ENCODE measurements at regions of chr10 and their contacts with region 1.

Region 1: DNA sequence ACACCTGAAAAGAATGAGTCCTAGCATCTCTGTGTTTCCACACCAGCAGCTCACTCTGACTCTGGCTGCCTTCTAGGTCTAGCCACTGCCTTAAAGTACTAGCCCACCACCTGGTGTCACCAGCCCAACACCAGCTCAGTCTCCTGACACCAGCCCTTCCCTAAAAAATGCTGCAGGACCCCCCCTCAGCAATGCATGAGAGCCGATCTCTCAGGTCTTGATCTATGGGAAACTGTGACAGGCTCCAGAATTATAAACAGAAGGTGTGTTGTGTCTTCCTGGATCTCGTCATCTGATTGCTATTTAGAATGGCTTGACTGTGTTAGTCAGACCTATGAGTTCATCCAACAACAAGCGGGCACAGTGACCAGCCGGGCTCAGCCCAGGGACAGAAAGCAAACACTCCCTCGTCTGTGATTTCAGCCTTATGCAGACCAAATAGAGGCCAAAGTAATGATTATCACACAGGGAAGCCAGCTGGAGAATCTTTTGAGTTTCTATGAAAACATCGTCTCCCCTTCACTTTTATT is 66.6 kb downstream of the CUBN start:
- DNase-seq: peak; percentile 72
- H3K4me3 Mint-ChIP-seq: peak overlapping the region; percentile 51
- H3K27ac Mint-ChIP-seq: peak overlapping the region; percentile 63
- H3K4me1 Mint-ChIP-seq: peaks cover 52% of the 10 kb centered on the region
- H3K27me3 Mint-ChIP-seq: no peaks in the 10 kb centered on the region
- CTCF ChIP-seq: no peak

Region 2: GRCh38 chr10:16853201-16853600 is 209.8 kb before region 1 on chr10:
- CTCF ChIA-PET with region 1: interaction called, 3 read pairs
- POLR2A ChIA-PET with region 1: no interaction called
- intact Hi-C with region 1: loop called (anchors 10 kb)
- DNase-seq: peak; percentile 33
- H3K4me3 Mint-ChIP-seq: no peak overlapping the region
- H3K27ac Mint-ChIP-seq: no peak overlapping the region
- H3K4me1 Mint-ChIP-seq: peaks cover 24% of the 10 kb centered on the region
- H3K27me3 Mint-ChIP-seq: no peaks in the 10 kb centered on the region
- CTCF ChIP-seq: peak; percentile 19

Region 3: GRCh38 chr10:17023386-17024298 is 39.4 kb before region 1 on chr10:
- CTCF ChIA-PET with region 1: no interaction called
- POLR2A ChIA-PET with region 1: interaction called, 4 read pairs
- intact Hi-C with region 1: loop called (anchors 1 kb)
- DNase-seq: peak; percentile 90
- H3K4me3 Mint-ChIP-seq: peak overlapping the region; percentile 67
- H3K27ac Mint-ChIP-seq: peak overlapping the region; percentile 98
- H3K4me1 Mint-ChIP-seq: peaks cover 28% of the 10 kb centered on the region
- H3K27me3 Mint-ChIP-seq: no peaks in the 10 kb centered on the region
- CTCF ChIP-seq: no peak

Region 4: GRCh38 chr10:17029581-17030271 is 33.3 kb before region 1 on chr10:
- CTCF ChIA-PET with region 1: no interaction called
- POLR2A ChIA-PET with region 1: no interaction called
- intact Hi-C with region 1: loop called (anchors 1 kb)
- DNase-seq: peak; percentile 82
- H3K4me3 Mint-ChIP-seq: peak overlapping the region; percentile 19
- H3K27ac Mint-ChIP-seq: peak overlapping the region; percentile 39
- H3K4me1 Mint-ChIP-seq: peaks cover 19% of the 10 kb centered on the region
- H3K27me3 Mint-ChIP-seq: no peaks in the 10 kb centered on the region
- CTCF ChIP-seq: no peak

Region 5: GRCh38 chr10:17075533-17076359 is 12.7 kb after region 1 on chr10:
- CTCF ChIA-PET with region 1: no interaction called
- POLR2A ChIA-PET with region 1: interaction called, 27 read pairs
- intact Hi-C with region 1: no loop called
- DNase-seq: peak; percentile 87
- H3K4me3 Mint-ChIP-seq: no peak overlapping the region
- H3K27ac Mint-ChIP-seq: peak overlapping the region; percentile 54
- H3K4me1 Mint-ChIP-seq: peaks cover 29% of the 10 kb centered on the region
- H3K27me3 Mint-ChIP-seq: no peaks in the 10 kb centered on the region
- CTCF ChIP-seq: no peak

Region 6: GRCh38 chr10:17128261-17128660 is 65.2 kb after region 1 on chr10:
- CTCF ChIA-PET with region 1: no interaction called
- POLR2A ChIA-PET with region 1: no interaction called
- intact Hi-C with region 1: no loop called
- DNase-seq: no peak
- H3K4me3 Mint-ChIP-seq: no peak overlapping the region
- H3K27ac Mint-ChIP-seq: no peak overlapping the region
- H3K4me1 Mint-ChIP-seq: no peaks in the 10 kb centered on the region
- H3K27me3 Mint-ChIP-seq: no peaks in the 10 kb centered on the region
- CTCF ChIP-seq: no peak